ENCODE measurements at regions of chr5 and their contacts with region 1.

Region 1: DNA sequence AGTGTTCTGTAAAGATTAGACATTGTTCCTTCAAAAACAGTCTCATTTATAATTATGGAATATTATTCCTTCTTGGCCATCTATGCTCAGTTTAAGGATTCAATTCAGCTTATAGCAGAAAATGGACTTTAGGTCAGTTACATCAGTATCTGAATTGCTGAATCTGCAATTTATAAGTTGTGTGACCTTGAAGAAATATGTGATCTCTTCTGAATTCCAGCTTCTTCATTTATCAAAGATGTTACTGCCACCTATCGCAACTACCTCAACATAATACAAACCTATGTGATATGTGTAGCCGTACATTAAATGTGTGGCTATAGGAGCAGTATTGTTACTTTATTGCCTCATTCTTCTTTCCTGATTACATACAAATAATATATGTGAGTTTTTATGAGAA is 118.2 kb downstream of the CDH12 start:
- DNase-seq: no peak
- H3K4me3 Mint-ChIP-seq: no peak overlapping the region
- H3K27ac Mint-ChIP-seq: no peak overlapping the region
- H3K4me1 Mint-ChIP-seq: no peaks in the 10 kb centered on the region
- H3K27me3 Mint-ChIP-seq: no peaks in the 10 kb centered on the region
- CTCF ChIP-seq: no peak

Region 2: DNA sequence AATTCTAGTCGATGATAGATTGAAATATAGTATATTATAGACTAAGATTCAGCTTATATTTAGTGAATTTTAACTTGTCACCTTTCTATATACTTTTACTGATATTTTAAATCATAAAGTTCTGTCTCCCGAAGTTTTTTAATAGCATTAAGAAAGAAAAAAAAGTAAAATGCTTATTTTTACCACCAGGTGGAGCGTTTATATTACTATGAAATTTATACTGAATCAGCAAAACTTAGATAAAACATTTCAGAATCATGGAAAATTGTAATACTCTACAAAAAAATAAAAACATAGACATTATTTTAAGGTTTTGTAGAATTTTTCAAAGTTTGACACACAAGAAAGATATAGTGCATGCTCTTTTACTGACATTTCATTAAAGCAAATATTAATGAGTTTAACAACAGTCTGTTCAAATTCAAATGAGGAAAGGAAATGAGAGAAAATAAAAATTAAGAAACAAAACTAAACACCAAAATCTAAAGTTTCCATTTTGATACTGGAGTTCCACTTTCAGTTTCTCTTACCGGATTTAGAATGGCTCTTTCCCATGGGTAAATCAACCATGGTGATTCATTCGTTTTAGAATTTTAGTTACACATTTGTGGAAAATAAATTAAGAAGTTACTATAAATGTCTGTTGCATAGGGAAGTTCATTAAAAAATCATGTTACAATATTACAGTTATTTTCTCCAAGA is 917.1 kb before region 1 on chr5:
- CTCF ChIA-PET with region 1: no interaction called
- POLR2A ChIA-PET with region 1: no interaction called
- intact Hi-C with region 1: loop called (anchors 5 kb)
- DNase-seq: peak; percentile 23
- H3K4me3 Mint-ChIP-seq: no peak overlapping the region
- H3K27ac Mint-ChIP-seq: peak overlapping the region; percentile 51
- H3K4me1 Mint-ChIP-seq: peaks cover 13% of the 10 kb centered on the region
- H3K27me3 Mint-ChIP-seq: no peaks in the 10 kb centered on the region
- CTCF ChIP-seq: peak; percentile 33

Region 3: GRCh38 chr5:22662391-22662790 is 72.5 kb before region 1 on chr5:
- CTCF ChIA-PET with region 1: no interaction called
- POLR2A ChIA-PET with region 1: no interaction called
- intact Hi-C with region 1: loop called (anchors 5 kb)
- DNase-seq: no peak
- H3K4me3 Mint-ChIP-seq: no peak overlapping the region
- H3K27ac Mint-ChIP-seq: no peak overlapping the region
- H3K4me1 Mint-ChIP-seq: no peaks in the 10 kb centered on the region
- H3K27me3 Mint-ChIP-seq: no peaks in the 10 kb centered on the region
- CTCF ChIP-seq: no peak